Colonic mucosa (tissue), 4 donors: ENCODE measurements at regions of chr19 and their contacts with region 1.

Region 1: GRCh38 chr19:13597640-13598039 is 91.4 kb upstream of the CACNA1A start:
- DNase-seq: peak; percentile 48
- H3K4me3 ChIP-seq: no peak overlapping the region
- H3K27ac ChIP-seq: no peak overlapping the region
- H3K4me1 ChIP-seq: no peaks in the 10 kb centered on the region
- H3K27me3 ChIP-seq: no peaks in the 10 kb centered on the region
- CTCF ChIP-seq: peak; percentile 41

Region 2: DNA sequence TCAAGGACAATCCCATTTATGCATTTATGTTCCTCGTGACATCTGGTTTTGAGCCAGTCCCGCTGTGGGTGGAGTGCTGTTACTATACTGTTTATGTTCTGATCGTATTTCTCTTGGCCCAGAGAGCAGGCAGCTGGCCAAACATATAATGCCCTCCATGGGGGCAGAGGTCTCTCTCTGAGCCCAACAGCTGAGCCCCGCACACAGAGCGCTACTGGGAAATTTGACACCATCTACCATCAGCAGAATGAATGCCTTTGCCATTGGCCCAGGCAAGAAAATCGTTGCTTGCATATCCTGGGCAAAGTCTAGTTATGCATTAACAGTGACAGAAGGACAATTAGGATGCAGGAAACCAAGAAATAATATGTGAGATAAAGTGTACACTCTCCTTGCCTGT is 35.5 kb after region 1 on chr19:
- intact Hi-C with region 1: no loop called
- DNase-seq: peak; percentile 89
- H3K4me3 ChIP-seq: no peak overlapping the region
- H3K27ac ChIP-seq: peak overlapping the region; percentile 84
- H3K4me1 ChIP-seq: no peaks in the 10 kb centered on the region
- H3K27me3 ChIP-seq: no peaks in the 10 kb centered on the region
- CTCF ChIP-seq: no peak

Region 3: DNA sequence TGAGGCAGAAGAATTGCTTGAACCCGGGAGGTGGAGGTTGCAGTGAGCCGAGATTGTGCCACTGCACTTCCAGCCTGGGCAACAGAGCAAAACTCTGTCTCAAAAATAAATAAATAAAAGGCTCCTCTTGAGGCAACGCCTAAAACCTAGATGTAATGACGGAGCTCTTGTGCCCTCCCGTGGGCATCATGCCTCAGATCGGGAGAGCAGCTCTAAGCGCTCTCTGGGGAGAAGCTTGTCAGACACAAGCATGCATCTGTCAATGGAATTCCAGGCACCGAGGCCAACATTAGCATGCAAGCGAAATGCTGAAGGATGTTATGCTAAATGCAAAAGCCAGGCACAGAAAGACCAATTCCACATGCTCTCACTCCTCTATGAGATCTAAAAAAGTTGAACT is 121.1 kb after region 1 on chr19:
- intact Hi-C with region 1: loop called (anchors 2 kb)
- DNase-seq: peak; percentile 31
- H3K4me3 ChIP-seq: no peak overlapping the region
- H3K27ac ChIP-seq: no peak overlapping the region
- H3K4me1 ChIP-seq: no peaks in the 10 kb centered on the region
- H3K27me3 ChIP-seq: no peaks in the 10 kb centered on the region
- CTCF ChIP-seq: no peak

Region 4: GRCh38 chr19:13861732-13862531 is 264.3 kb after region 1 on chr19:
- intact Hi-C with region 1: loop called (anchors 5 kb)
- DNase-seq: peak; percentile 94
- H3K4me3 ChIP-seq: peak overlapping the region; percentile 39
- H3K27ac ChIP-seq: peak overlapping the region; percentile 87
- H3K4me1 ChIP-seq: no peaks in the 10 kb centered on the region
- H3K27me3 ChIP-seq: no peaks in the 10 kb centered on the region
- CTCF ChIP-seq: peak; percentile 99